PC-9 (cell line): ENCODE measurements at regions of chr7 and their contacts with region 1.

Region 1: GRCh38 chr7:28020302-28020940 is 160.2 kb downstream of the JAZF1 start:
- DNase-seq: peak; percentile 66 to 69
- H3K4me3 ChIP-seq: no peak overlapping the region
- H3K27ac ChIP-seq: no peak overlapping the region
- H3K4me1 ChIP-seq: peaks cover 8% of the 10 kb centered on the region; the same call in 1 of the 2 replicates
- H3K27me3 ChIP-seq: no peaks in the 10 kb centered on the region
- CTCF ChIP-seq: peak; percentile 96

Region 2: DNA sequence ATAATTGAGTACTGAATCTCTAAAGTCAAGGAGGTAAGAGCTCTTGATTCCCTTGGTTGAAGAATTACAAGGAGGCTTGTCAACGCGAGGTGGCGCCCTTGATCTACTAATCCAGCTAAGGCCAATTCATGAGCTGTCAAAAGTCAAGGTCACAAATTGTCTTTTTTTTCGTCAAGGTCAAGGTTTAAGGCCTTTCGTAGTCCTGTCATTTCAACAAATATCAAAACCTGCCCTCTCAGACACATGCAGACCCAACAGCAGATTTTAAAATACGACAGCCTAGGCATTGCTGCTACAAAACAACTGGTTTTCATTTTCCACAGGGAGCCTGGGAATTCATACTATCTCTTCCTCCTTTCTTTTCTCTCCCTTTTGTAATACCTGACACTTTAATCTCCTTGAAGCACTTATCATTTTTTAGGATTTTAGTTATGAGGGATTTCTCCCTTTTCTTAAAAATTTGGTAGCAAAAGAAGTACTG is 824.1 kb before region 1 on chr7:
- CTCF ChIA-PET with region 1: interaction called, 4 read pairs
- POLR2A ChIA-PET with region 1: no interaction called
- intact Hi-C with region 1: loop called (anchors 1 kb)
- DNase-seq: peak; percentile 59 to 76
- H3K4me3 ChIP-seq: no peak overlapping the region
- H3K27ac ChIP-seq: no peak overlapping the region
- H3K4me1 ChIP-seq: no peaks in the 10 kb centered on the region
- H3K27me3 ChIP-seq: peaks cover 13% of the 10 kb centered on the region; the same call in 1 of the 2 replicates
- CTCF ChIP-seq: peak; percentile 99

Region 3: GRCh38 chr7:27576360-27576944 is 444.0 kb before region 1 on chr7:
- CTCF ChIA-PET with region 1: no interaction called
- POLR2A ChIA-PET with region 1: no interaction called
- intact Hi-C with region 1: loop called (anchors 1 kb)
- DNase-seq: no peak
- H3K4me3 ChIP-seq: no peak overlapping the region
- H3K27ac ChIP-seq: no peak overlapping the region
- H3K4me1 ChIP-seq: no peaks in the 10 kb centered on the region
- H3K27me3 ChIP-seq: no peaks in the 10 kb centered on the region
- CTCF ChIP-seq: peak; percentile 91

Region 4: DNA sequence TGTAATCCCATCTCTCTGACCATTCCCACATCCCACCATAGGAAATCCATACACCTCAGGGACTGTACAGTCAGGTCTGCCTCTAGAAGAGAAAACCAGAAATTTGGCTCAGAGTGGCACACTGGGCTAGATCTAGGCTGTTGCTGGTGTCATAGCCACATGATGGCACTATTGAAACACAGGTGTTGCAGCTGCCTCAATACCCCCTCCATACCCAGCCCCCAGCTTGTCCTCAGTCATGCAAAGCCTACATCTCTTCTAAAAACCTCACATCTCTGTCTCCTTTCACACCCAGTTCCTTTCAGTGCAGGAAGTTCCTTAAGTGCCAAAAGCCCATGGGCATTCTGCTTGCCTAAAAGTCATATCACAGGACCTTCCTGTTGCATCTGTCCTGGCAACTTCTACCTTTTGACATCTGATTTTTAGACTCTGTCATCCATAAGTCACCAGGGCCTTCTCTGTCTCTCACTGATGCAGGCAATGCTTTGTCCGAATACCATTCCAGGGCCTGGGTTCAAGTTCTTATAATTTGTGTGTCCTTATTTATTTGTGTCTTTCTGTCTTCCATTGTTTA is 330.7 kb before region 1 on chr7:
- CTCF ChIA-PET with region 1: no interaction called
- POLR2A ChIA-PET with region 1: no interaction called
- intact Hi-C with region 1: loop called (anchors 1 kb)
- DNase-seq: peak; percentile 49 to 59
- H3K4me3 ChIP-seq: no peak overlapping the region
- H3K27ac ChIP-seq: no peak overlapping the region
- H3K4me1 ChIP-seq: peaks cover 16% of the 10 kb centered on the region
- H3K27me3 ChIP-seq: no peaks in the 10 kb centered on the region
- CTCF ChIP-seq: peak; percentile 69

Region 5: GRCh38 chr7:27774717-27775328 is 245.6 kb before region 1 on chr7:
- CTCF ChIA-PET with region 1: no interaction called
- POLR2A ChIA-PET with region 1: no interaction called
- intact Hi-C with region 1: loop called (anchors 1 kb)
- DNase-seq: no peak
- H3K4me3 ChIP-seq: no peak overlapping the region
- H3K27ac ChIP-seq: no peak overlapping the region
- H3K4me1 ChIP-seq: peaks cover 23% of the 10 kb centered on the region
- H3K27me3 ChIP-seq: no peaks in the 10 kb centered on the region
- CTCF ChIP-seq: peak; percentile 88

Region 6: GRCh38 chr7:27933671-27934565 is 86.5 kb before region 1 on chr7:
- CTCF ChIA-PET with region 1: no interaction called
- POLR2A ChIA-PET with region 1: no interaction called
- intact Hi-C with region 1: no loop called
- DNase-seq: no peak
- H3K4me3 ChIP-seq: no peak overlapping the region
- H3K27ac ChIP-seq: no peak overlapping the region
- H3K4me1 ChIP-seq: no peaks in the 10 kb centered on the region
- H3K27me3 ChIP-seq: no peaks in the 10 kb centered on the region
- CTCF ChIP-seq: peak; percentile 57

Region 7: GRCh38 chr7:28179120-28180030 is 159.0 kb after region 1 on chr7:
- CTCF ChIA-PET with region 1: no interaction called
- POLR2A ChIA-PET with region 1: no interaction called
- intact Hi-C with region 1: no loop called
- DNase-seq: peak; percentile 46 to 62
- H3K4me3 ChIP-seq: peak overlapping the region; percentile 48; the same call in 1 of the 2 replicates
- H3K27ac ChIP-seq: no peak overlapping the region
- H3K4me1 ChIP-seq: peaks cover 5% of the 10 kb centered on the region; the same call in 1 of the 2 replicates
- H3K27me3 ChIP-seq: no peaks in the 10 kb centered on the region
- CTCF ChIP-seq: no peak